Heart left ventricle (tissue), 16 donors: ENCODE measurements at regions of chr5 and their contacts with region 1.

Region 1: DNA sequence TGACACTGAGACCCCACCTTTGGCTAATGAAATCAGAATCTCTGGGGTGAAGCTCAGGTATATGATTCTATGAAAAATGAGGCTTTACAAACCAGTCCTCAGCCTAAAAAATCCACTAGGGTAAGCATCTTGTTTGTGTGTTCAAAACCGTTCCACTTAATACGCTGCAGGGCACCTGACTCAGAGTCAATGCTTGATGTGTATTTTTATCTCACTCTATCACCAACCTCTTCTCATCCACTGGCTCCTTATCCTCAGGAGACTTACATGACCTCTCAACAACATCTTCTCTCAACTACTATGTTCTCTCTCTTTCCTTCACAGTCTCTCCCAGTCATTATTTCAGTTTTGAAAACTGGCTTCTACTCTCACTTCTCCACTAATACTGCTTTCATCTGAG is 153.3 kb upstream of the KCNN2 start:
- DNase-seq: no peak
- ATAC-seq: peak in 3 of 4 donors; percentile 41 to 46 (median 42)
- H3K4me3 ChIP-seq: no peak overlapping the region
- H3K27ac ChIP-seq: no peak overlapping the region
- H3K4me1 ChIP-seq: peaks cover 0 to 6% (median 0%) of the 10 kb centered on the region in 12 donors
- H3K27me3 ChIP-seq: no peaks in the 10 kb centered on the region
- CTCF ChIP-seq: no peak
- POLR2A ChIP-seq: no peak

Region 2: DNA sequence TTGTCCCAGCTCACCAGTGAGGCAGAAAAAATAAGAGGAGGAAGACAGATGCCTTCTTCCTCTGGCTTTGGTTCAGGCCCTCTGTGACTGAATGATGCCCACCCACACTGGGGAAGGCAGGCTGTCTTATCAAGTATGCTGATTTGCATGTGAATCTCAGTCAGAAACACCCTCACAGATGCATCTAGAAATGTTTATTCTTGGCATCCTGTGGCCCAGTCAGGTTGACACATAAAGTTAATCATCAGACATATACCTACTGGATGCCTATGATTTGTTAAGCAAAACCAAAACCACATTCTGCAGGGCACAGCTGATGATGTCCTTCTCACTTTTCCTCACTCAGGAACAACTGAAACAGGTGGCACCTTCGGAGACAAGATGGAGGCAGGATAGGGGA is 90.1 kb before region 1 on chr5:
- intact Hi-C with region 1: loop called in 1 of 10 experiments (anchors 10 kb)
- DNase-seq: no peak
- ATAC-seq: no peak
- H3K4me3 ChIP-seq: no peak overlapping the region
- H3K27ac ChIP-seq: no peak overlapping the region
- H3K4me1 ChIP-seq: peaks cover 0 to 7% (median 0%) of the 10 kb centered on the region in 12 donors
- H3K27me3 ChIP-seq: no peaks in the 10 kb centered on the region
- CTCF ChIP-seq: no peak
- POLR2A ChIP-seq: no peak